ENCODE measurements at regions of chr2 and their contacts with region 1.

Region 1: DNA sequence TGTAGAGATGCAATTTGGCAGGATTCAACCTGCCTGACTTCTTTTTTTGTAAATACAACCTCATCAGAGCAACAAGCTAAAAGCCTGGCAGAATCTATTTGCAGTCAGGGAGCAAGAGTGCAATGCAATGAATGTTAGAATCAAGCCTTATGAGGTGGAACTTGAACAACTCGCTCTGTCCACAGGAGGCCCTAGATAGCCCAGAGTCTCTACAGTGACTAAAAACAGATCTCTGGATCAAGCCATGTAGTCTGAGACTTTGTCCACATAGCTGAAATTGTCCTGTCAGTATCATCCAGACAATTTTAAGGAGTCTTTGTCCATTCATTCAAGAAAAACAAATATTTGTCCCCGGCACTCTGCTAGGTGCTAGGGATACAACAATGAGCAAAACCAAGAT is 32.0 kb upstream of the CDK5R2 start:
- DNase-seq: no peak
- H3K4me3 ChIP-seq: no peak overlapping the region
- H3K27ac ChIP-seq: no peak overlapping the region
- H3K4me1 ChIP-seq: no peaks in the 10 kb centered on the region
- H3K27me3 ChIP-seq: peaks cover 2 to 3% of the 10 kb centered on the region in 2 experiments
- CTCF ChIP-seq: no peak
- POLR2A ChIP-seq: no peak

Region 2: DNA sequence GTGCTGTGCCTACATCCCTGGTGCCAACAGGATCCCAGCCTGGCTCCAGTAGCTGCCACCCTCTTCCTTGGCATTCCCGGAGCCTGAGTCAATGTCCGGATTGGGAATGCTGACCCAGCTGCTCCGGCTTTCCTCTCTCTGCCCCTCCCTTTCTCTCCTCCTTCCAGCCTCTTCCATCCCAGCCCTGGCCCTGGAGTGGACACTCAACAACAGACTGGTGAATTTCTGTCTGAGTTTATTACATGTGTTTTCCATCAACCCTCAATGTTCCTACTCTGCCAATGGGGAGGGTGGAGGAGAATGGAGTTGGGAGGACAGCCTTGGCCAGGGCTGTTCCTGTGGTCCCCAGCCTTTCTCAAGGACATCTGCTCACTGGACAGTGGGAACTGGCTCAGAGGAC is 94.9 kb before region 1 on chr2:
- CTCF ChIA-PET with region 1: no interaction called
- POLR2A ChIA-PET with region 1: no interaction called
- dilution Hi-C with region 1: no loop called
- intact Hi-C with region 1: no loop called
- DNase-seq: peak; percentile 71
- H3K4me3 ChIP-seq: no peak overlapping the region
- H3K27ac ChIP-seq: peak overlapping the region; percentile 65
- H3K4me1 ChIP-seq: peaks cover 17% of the 10 kb centered on the region
- H3K27me3 ChIP-seq: peaks cover 0 to 2% of the 10 kb centered on the region in 2 experiments
- CTCF ChIP-seq: no peak
- POLR2A ChIP-seq: no peak

Region 3: GRCh38 chr2:218944759-218945404 is 17.5 kb after region 1 on chr2:
- CTCF ChIA-PET with region 1: interaction called, 3 read pairs
- POLR2A ChIA-PET with region 1: interaction called, 13 read pairs
- dilution Hi-C with region 1: no loop called
- intact Hi-C with region 1: no loop called
- DNase-seq: no peak
- H3K4me3 ChIP-seq: no peak overlapping the region
- H3K27ac ChIP-seq: no peak overlapping the region
- H3K4me1 ChIP-seq: no peaks in the 10 kb centered on the region
- H3K27me3 ChIP-seq: peaks cover 2 to 8% of the 10 kb centered on the region in 2 experiments
- CTCF ChIP-seq: no peak
- POLR2A ChIP-seq: no peak

Region 4: GRCh38 chr2:219186754-219187456 is 259.5 kb after region 1 on chr2:
- CTCF ChIA-PET with region 1: no interaction called
- POLR2A ChIA-PET with region 1: no interaction called
- dilution Hi-C with region 1: no loop called
- intact Hi-C with region 1: no loop called
- DNase-seq: no peak
- H3K4me3 ChIP-seq: no peak overlapping the region
- H3K27ac ChIP-seq: no peak overlapping the region
- H3K4me1 ChIP-seq: no peaks in the 10 kb centered on the region
- H3K27me3 ChIP-seq: no peaks in the 10 kb centered on the region
- CTCF ChIP-seq: no peak
- POLR2A ChIP-seq: no peak